ENCODE measurements at regions of chr5 and their contacts with region 1.

Region 1: DNA sequence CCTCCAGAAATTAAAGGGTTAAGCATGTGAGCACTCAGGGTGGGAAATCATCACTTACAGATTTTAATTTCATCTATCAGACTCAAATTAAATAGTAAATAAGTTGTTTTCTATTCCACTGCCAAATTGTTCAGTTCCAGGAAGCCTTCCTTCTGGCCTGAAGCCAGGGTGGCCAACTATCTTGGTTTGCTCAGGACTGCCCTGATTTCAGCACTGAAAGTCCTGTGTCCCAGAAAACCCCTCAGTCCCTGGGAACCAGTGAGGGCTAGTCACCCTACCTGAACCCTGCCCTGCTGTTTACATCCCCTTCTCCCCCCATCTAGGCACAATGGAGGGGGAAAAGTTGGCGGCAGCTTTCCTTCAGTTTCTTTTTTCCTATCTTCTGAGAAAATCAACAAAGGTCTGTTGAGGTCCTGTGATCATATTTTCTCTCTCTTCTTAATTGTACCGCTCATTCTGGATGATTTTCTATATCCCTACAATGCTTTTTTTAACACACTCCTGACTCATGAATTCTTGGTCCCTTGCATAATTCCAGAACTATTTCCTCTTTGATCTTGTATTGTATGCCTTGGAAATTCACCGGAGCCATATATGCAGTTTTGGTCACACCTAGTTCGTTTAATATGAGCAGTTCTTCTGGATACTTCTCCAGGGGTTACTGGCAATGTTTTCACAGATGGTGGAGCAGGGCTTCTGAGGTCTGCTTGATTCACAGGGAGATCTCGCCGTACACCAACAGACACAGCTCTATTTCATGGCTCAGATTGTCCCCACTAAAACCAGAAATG is 103.8 kb downstream of the MAP1B start:
- DNase-seq: peak in 4 of 5 donors; percentile 37 to 66 (median 58)
- ATAC-seq: peak in 3 of 4 donors; percentile 46 to 68 (median 66)
- H3K4me3 ChIP-seq: peak overlapping the region in 1 of 12 donors; percentile 4
- H3K27ac ChIP-seq: peak overlapping the region in 11 of 12 donors; percentile 7 to 84 (median 67)
- H3K4me1 ChIP-seq: peaks cover 0 to 20% (median 14%) of the 10 kb centered on the region in 12 donors
- H3K27me3 ChIP-seq: no peaks in the 10 kb centered on the region
- CTCF ChIP-seq: no peak
- POLR2A ChIP-seq: no peak

Region 2: GRCh38 chr5:72046106-72046505 is 165.0 kb before region 1 on chr5:
- intact Hi-C with region 1: no loop called
- DNase-seq: no peak
- ATAC-seq: no peak
- H3K4me3 ChIP-seq: no peak overlapping the region
- H3K27ac ChIP-seq: no peak overlapping the region
- H3K4me1 ChIP-seq: no peaks in the 10 kb centered on the region
- H3K27me3 ChIP-seq: no peaks in the 10 kb centered on the region
- CTCF ChIP-seq: no peak
- POLR2A ChIP-seq: no peak

Region 3: GRCh38 chr5:72234265-72234700 is 23.2 kb after region 1 on chr5:
- intact Hi-C with region 1: no loop called
- DNase-seq: no peak
- ATAC-seq: peak in 2 of 4 donors; percentile 46 to 85
- H3K4me3 ChIP-seq: no peak overlapping the region
- H3K27ac ChIP-seq: peak overlapping the region in 1 of 12 donors; percentile 22
- H3K4me1 ChIP-seq: peaks cover 0 to 41% (median 3%) of the 10 kb centered on the region in 12 donors
- H3K27me3 ChIP-seq: no peaks in the 10 kb centered on the region
- CTCF ChIP-seq: no peak
- POLR2A ChIP-seq: no peak

Region 4: GRCh38 chr5:72244862-72245371 is 33.8 kb after region 1 on chr5:
- intact Hi-C with region 1: loop called in 1 of 10 experiments (anchors 5 kb)
- DNase-seq: peak in 1 of 5 donors; percentile 22
- ATAC-seq: peak; percentile 81 to 85 (median 84)
- H3K4me3 ChIP-seq: no peak overlapping the region
- H3K27ac ChIP-seq: peak overlapping the region in 11 of 12 donors; percentile 25 to 71 (median 55)
- H3K4me1 ChIP-seq: peaks cover 7 to 56% (median 47%) of the 10 kb centered on the region in 12 donors
- H3K27me3 ChIP-seq: no peaks in the 10 kb centered on the region
- CTCF ChIP-seq: peak in 10 of 12 donors; percentile 14 to 50 (median 39)
- POLR2A ChIP-seq: no peak

Region 5: DNA sequence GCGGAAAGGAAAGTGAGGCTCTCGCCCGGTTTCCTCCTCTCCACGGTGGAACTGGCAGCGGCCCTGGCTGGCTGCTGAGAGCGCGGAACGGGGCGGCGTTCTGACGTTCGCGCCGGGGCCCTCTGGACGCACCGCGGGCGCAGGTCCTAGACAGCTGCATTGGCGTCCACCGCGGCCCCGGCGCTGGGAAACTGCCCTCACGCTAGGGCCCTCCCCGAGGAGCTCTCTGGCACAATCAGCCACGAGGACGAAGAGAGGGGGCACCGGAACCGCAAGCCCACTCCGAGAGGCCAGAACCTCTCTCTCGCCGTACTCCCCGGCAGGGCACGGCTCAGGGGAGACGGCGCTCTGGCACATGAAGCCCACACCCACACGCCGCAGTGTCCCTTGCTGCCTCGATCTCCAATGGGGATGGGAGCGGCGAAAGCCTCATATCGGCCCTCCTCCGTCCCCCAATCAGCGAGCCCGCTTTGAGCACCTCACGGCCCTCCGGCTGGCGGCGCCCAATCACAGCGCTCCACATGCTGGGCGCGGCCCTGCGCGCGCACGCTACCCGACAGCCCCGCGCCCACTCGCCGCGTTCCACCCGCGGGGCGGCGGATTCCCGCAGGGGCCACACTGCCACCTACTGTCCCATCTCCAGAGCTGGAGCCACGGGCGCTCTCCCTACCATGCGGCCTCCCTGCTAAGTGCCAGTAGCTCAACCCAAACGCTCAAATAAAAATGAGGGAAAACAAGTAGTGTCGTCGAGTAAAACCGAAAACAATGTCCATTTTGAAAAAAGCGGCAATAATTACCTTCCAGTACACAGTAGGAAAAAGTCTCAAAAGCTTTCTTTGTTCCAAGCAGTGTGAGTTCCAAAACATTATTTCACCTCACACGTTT is 97.1 kb after region 1 on chr5:
- intact Hi-C with region 1: loop called in 2 of 10 experiments (anchors 5 to 10 kb)
- DNase-seq: peak; percentile 97 to 99 (median 99)
- ATAC-seq: peak; percentile 99
- H3K4me3 ChIP-seq: peak overlapping the region; percentile 55 to 87 (median 70)
- H3K27ac ChIP-seq: peak overlapping the region; percentile 81 to 99 (median 94)
- H3K4me1 ChIP-seq: peaks cover 0 to 32% (median 7%) of the 10 kb centered on the region in 12 donors
- H3K27me3 ChIP-seq: no peaks in the 10 kb centered on the region
- CTCF ChIP-seq: peak; percentile 86 to 97 (median 93)
- POLR2A ChIP-seq: peak; percentile 83 to 98

Region 6: DNA sequence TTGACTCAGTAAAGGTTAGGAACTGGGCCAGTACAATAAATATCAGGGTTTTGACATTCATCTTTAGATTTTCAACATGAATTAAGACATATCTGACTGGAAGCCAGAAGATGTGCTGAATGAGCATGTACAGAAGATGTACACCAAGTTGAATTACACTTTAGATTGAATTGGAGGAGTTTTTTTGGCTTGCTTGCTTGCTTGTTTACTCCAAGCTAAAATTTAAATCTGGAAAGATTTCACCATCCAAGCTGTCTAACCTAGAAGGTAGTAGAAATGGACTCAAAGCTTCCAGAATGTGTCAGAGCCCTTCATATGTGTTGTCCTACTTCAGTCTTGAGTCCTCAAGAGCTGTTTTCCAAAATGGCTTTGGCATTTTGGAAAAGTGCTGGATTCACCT is 695.7 kb after region 1 on chr5:
- intact Hi-C with region 1: no loop called
- DNase-seq: no peak
- ATAC-seq: no peak
- H3K4me3 ChIP-seq: no peak overlapping the region
- H3K27ac ChIP-seq: no peak overlapping the region
- H3K4me1 ChIP-seq: no peaks in the 10 kb centered on the region
- H3K27me3 ChIP-seq: no peaks in the 10 kb centered on the region
- CTCF ChIP-seq: no peak
- POLR2A ChIP-seq: no peak